ENCODE measurements at regions of chr3 and their contacts with region 1.

Region 1: DNA sequence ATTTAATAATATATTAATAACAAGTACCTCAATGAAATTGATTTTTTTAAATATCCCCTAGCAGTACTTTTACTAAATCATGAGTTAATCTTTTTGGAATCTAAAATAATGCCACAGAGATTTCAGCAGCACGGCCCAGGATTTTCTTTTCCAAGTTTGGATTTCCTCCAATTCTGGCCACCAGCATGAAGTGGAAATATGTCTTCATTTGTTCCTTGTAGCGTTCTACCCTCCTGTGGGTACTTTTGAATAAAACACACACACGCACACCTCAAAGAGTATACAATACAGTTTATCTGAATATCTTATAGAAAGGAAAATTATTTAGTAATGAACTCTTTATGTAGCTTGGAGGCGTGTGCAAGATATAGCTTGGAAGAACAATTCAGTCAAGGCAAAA is 125.1 kb upstream of the STT3B start:
- DNase-seq: no peak
- H3K4me3 ChIP-seq: no peak overlapping the region
- H3K27ac ChIP-seq: no peak overlapping the region
- H3K4me1 ChIP-seq: no peaks in the 10 kb centered on the region
- H3K27me3 ChIP-seq: no peaks in the 10 kb centered on the region
- CTCF ChIP-seq: no peak
- EP300 ChIP-seq: no peak
- POLR2A ChIP-seq: no peak

Region 2: GRCh38 chr3:31288641-31289100 is 119.0 kb before region 1 on chr3:
- intact Hi-C with region 1: loop called in 1 of 4 experiments (anchors 10 kb)
- DNase-seq: peak; percentile 62 to 88 (median 66)
- H3K4me3 ChIP-seq: no peak overlapping the region
- H3K27ac ChIP-seq: peak overlapping the region in 1 of 2 donors; percentile 53
- H3K4me1 ChIP-seq: peaks cover 7% of the 10 kb centered on the region
- H3K27me3 ChIP-seq: no peaks in the 10 kb centered on the region
- CTCF ChIP-seq: no peak
- EP300 ChIP-seq: no peak
- POLR2A ChIP-seq: no peak

Region 3: DNA sequence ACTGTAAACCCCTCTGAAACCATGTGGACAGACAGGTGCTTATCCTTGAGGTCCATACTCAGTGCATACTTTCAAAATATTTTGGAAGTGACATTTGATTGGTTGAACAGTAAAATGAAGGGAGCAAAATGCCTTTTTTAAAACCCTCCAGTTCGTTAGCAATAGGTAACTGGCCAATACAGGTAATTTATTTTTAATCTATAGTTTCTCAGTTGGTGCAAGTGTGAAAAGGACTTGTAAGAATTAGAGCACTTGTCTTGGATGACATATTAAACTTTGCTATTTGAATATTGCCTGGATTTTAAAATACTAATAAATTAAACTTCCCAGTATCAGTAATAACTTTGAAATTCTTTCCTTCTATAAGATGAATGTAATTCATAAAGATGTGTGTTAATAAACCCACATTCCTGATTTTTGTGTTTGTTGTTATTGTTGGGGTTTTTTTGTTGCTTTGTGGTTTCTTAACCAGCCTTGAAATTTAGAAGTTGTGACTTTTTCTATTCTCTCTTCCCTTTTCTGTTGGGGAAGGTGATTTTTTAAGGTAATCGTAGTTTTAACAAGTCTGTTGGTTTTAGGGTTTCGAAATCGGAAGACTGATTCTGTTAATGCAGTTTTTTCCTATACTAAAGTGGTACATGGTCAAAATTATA is 215.1 kb after region 1 on chr3:
- intact Hi-C with region 1: no loop called
- DNase-seq: no peak
- H3K4me3 ChIP-seq: no peak overlapping the region
- H3K27ac ChIP-seq: no peak overlapping the region
- H3K4me1 ChIP-seq: no peaks in the 10 kb centered on the region
- H3K27me3 ChIP-seq: no peaks in the 10 kb centered on the region
- CTCF ChIP-seq: no peak
- EP300 ChIP-seq: no peak
- POLR2A ChIP-seq: no peak

Measured in ovary (tissue), 10 donors.